ENCODE measurements at regions of chr17 and their contacts with region 1.

Region 1: GRCh38 chr17:72120642-72121163 is at the start of gene SOX9:
- DNase-seq: peak; percentile 85
- ATAC-seq: peak; percentile 87
- H3K4me3 ChIP-seq: peak within 1 kb of the TSS; percentile 76 to 89
- H3K27ac ChIP-seq: peak within 1 kb of the TSS; percentile 97
- H3K4me1 ChIP-seq: peaks cover 28% of the 10 kb centered on the region
- H3K27me3 ChIP-seq: no peaks in the 10 kb centered on the region
- CTCF ChIP-seq: no peak
- total RNA-seq, gene SOX9: 79.5 TPM

Region 2: GRCh38 chr17:71118039-71118438 is 1002.7 kb before region 1 on chr17:
- CTCF ChIA-PET with region 1: no interaction called
- POLR2A ChIA-PET with region 1: no interaction called
- in situ Hi-C with region 1: no loop called
- intact Hi-C with region 1: loop called (anchors 2 kb)
- DNase-seq: no peak
- ATAC-seq: no peak
- H3K4me3 ChIP-seq: no peak overlapping the region
- H3K27ac ChIP-seq: no peak overlapping the region
- H3K4me1 ChIP-seq: no peaks in the 10 kb centered on the region
- H3K27me3 ChIP-seq: no peaks in the 10 kb centered on the region; the same call in 1 of the 2 replicates
- CTCF ChIP-seq: peak; percentile 42; the same call in 1 of the 2 replicates

Region 3: DNA sequence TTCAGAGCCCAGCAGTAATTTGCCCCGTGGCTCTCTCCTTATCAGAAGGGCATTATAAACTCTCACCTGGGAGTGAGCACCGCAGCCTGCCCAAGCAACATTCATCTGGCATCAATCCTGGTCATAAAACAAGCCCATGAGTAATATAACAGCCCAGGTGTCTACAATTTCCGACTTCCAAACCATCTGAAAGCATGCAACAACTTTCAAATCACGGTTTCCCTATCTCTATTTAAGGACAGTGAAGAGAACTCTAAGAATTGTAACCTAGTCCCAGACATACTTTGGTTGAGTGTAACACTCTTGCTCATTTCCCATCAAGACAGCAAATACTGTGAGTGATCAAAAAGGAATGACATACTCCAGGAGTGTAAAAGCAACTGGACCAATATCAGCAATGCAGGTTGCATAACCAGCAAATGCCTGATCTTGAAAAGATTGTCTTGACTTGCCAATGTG is 487.3 kb before region 1 on chr17:
- CTCF ChIA-PET with region 1: no interaction called
- POLR2A ChIA-PET with region 1: no interaction called
- in situ Hi-C with region 1: no loop called
- intact Hi-C with region 1: loop called (anchors 10 kb)
- DNase-seq: peak; percentile 56
- ATAC-seq: peak; percentile 80
- H3K4me3 ChIP-seq: no peak overlapping the region
- H3K27ac ChIP-seq: no peak overlapping the region
- H3K4me1 ChIP-seq: no peaks in the 10 kb centered on the region
- H3K27me3 ChIP-seq: no peaks in the 10 kb centered on the region
- CTCF ChIP-seq: no peak

Region 4: DNA sequence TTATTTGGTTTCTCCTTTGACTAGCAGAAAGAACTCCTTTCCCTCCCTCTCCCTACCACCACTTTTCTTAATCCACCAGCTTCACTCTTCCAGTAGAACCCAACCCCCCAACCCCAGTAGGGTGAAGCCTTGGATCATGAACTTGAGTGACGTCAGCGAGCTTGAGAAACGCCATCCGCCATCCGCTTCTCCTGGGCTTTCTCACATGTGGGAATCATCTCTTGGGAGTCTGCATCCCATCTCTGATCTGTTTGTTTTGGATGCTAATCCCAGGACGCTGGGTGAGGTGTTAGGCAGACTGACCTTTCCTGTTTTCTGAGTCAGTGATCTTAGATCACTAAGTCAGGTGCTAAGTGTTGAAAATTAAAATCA is 15.9 kb before region 1 on chr17:
- CTCF ChIA-PET with region 1: interaction called, 4 read pairs
- POLR2A ChIA-PET with region 1: interaction called, 12 read pairs
- in situ Hi-C with region 1: no loop called
- intact Hi-C with region 1: no loop called
- DNase-seq: no peak
- ATAC-seq: no peak
- H3K4me3 ChIP-seq: no peak overlapping the region
- H3K27ac ChIP-seq: no peak overlapping the region
- H3K4me1 ChIP-seq: no peaks in the 10 kb centered on the region
- H3K27me3 ChIP-seq: no peaks in the 10 kb centered on the region
- CTCF ChIP-seq: no peak

Region 5: GRCh38 chr17:72392056-72393010 is 271.6 kb after region 1 on chr17:
- CTCF ChIA-PET with region 1: interaction called, 8 read pairs
- POLR2A ChIA-PET with region 1: interaction called, 5 read pairs
- in situ Hi-C with region 1: no loop called
- intact Hi-C with region 1: loop called (anchors 10 kb)
- DNase-seq: no peak
- ATAC-seq: no peak
- H3K4me3 ChIP-seq: no peak overlapping the region
- H3K27ac ChIP-seq: peak overlapping the region; percentile 92
- H3K4me1 ChIP-seq: peaks cover 83% of the 10 kb centered on the region
- H3K27me3 ChIP-seq: no peaks in the 10 kb centered on the region
- CTCF ChIP-seq: no peak

Region 6: DNA sequence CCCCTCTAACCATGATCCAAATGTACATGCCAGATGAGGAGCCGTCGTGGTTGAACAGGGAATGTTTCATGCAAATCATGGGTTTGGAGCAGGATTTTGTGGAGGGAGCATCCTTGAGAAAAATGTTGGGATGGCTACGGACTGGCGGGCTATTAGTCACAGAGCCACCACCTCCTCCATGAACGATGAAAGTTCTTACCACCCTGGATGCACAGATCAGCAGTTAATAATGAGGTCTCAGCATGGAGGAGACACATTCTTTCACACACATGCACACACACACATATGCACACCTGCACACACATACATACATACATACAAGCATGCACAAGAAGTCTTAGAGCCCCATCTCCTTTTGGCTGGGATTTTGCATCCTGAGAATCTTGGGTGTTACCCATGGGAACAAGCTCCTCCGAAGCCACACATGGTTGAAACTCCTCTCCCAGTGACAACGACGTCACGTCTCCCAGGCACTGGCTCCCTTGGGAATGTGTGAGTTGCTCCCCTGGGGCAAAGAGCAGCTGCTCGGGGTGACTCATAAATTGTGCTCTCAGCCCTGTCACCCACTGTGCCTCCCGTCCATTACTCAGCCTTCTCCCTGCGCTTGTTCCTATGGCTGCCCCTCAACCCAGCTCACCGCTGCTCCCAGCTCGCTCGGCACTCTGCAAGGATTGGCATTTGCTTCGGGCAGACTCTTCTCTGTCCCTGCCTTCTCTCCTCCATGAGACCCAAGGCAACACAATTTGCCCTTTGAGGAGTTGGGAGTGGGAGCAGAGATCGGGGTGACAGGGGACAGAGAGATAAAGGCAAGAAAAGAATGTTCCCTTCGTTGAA is 344.7 kb after region 1 on chr17:
- CTCF ChIA-PET with region 1: no interaction called
- POLR2A ChIA-PET with region 1: interaction called, 5 read pairs
- in situ Hi-C with region 1: no loop called
- intact Hi-C with region 1: loop called (anchors 10 kb)
- DNase-seq: peak; percentile 81
- ATAC-seq: peak; percentile 91
- H3K4me3 ChIP-seq: peak overlapping the region; percentile 19 to 56
- H3K27ac ChIP-seq: peak overlapping the region; percentile 98
- H3K4me1 ChIP-seq: peaks cover 98% of the 10 kb centered on the region
- H3K27me3 ChIP-seq: no peaks in the 10 kb centered on the region
- CTCF ChIP-seq: no peak

Region 7: GRCh38 chr17:72565006-72565405 is 444.3 kb after region 1 on chr17:
- CTCF ChIA-PET with region 1: no interaction called
- POLR2A ChIA-PET with region 1: interaction called, 19 read pairs
- in situ Hi-C with region 1: no loop called
- intact Hi-C with region 1: no loop called
- DNase-seq: no peak
- ATAC-seq: no peak
- H3K4me3 ChIP-seq: no peak overlapping the region
- H3K27ac ChIP-seq: peak overlapping the region; percentile 36; the same call in 1 of the 2 replicates
- H3K4me1 ChIP-seq: peaks cover 88% of the 10 kb centered on the region
- H3K27me3 ChIP-seq: no peaks in the 10 kb centered on the region
- CTCF ChIP-seq: no peak